Kidney (tissue), 22 donors: ENCODE measurements at regions of chr4 and their contacts with region 1.

Region 1: DNA sequence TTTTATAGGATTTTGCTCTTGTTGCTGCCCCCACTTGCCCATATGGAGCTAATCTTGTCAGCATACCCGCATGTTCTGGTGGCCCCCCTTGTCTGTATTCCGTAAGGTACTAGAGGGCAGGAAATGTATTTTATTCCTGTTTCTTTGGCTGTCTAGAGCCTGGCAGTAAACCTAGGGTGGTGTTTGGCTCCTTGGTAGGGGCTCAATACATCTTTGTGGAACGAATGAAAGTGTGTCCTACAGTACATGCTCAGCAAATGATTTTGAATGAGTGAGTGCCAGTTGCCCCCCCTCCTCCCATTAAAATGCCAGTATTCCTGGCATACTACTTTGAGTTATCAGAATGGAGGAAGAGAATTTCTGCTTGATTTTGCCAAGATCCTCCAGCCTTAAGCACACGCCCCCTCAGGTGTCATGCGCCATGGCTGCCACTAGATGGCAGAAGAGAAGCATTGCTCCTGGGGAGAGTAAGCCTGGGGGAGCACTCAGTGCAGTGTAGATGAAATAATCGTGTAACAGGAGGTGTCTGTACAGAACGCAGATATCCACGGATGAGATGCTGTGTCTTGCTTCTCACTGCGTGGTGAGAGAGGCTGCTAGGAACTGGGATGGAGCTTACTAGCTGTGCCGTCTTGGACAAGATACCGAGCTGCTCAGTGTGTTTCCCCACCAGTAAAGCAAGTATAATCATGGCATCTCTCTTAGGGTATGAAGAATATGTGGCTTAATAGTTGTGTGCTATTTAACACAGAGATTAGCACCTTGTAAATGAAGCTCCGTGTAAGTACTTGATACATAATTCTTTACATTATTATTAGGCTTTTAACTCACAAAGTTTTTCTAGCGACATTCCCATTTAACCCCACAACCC is 17.2 kb upstream of the RNF212 start:
- DNase-seq: peak in 4 of 5 donors; percentile 71 to 90 (median 76)
- H3K4me3 ChIP-seq: no peak overlapping the region
- H3K27ac ChIP-seq: no peak overlapping the region
- H3K4me1 ChIP-seq: peaks cover 0 to 4% (median 0%) of the 10 kb centered on the region in 3 donors
- H3K27me3 ChIP-seq: no peaks in the 10 kb centered on the region
- CTCF ChIP-seq: peak; percentile 98

Region 2: GRCh38 chr4:781493-782216 is 348.9 kb before region 1 on chr4:
- intact Hi-C with region 1: no loop called
- DNase-seq: peak; percentile 100
- H3K4me3 ChIP-seq: peak overlapping the region; percentile 65 to 90 (median 83)
- H3K27ac ChIP-seq: peak overlapping the region; percentile 75 to 93
- H3K4me1 ChIP-seq: peaks cover 0 to 28% (median 5%) of the 10 kb centered on the region in 3 donors
- H3K27me3 ChIP-seq: peaks cover 2% of the 10 kb centered on the region
- CTCF ChIP-seq: no peak

Region 3: GRCh38 chr4:1260418-1261106 is 130.0 kb after region 1 on chr4:
- intact Hi-C with region 1: loop called (anchors 10 kb)
- DNase-seq: no peak
- H3K4me3 ChIP-seq: no peak overlapping the region
- H3K27ac ChIP-seq: no peak overlapping the region
- H3K4me1 ChIP-seq: no peaks in the 10 kb centered on the region
- H3K27me3 ChIP-seq: no peaks in the 10 kb centered on the region
- CTCF ChIP-seq: no peak